Caco-2 (cell line): ENCODE measurements at regions of chrX and their contacts with region 1.

Region 1: DNA sequence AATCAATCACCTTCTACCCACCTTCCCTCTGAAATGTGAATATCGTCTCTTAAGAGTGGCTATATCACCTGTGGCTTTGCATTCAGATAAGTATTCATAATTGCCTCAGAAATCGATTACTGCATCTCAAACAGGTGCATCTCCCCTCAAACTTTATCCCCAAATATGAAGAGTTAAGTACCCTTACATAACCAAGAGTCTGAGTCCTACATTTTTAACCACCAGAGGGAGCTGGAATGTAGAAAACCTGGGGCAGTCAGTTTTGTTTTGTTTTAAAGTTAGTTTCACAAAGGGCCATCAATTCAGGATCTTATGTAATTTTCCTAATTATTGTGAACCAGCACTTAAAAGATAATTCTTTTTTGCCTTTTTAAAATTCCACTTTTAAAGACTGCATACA is 5.7 kb downstream of the TCEANC start:
- DNase-seq: peak in 1 of 2 experiments; percentile 50
- H3K4me3 ChIP-seq: no peak overlapping the region
- H3K4me3 Mint-ChIP-seq: no peak overlapping the region
- H3K27ac Mint-ChIP-seq: no peak overlapping the region
- H3K4me1 ChIP-seq: peaks cover 5% of the 10 kb centered on the region
- H3K4me1 Mint-ChIP-seq: no peaks in the 10 kb centered on the region
- H3K27me3 ChIP-seq: no peaks in the 10 kb centered on the region
- H3K27me3 Mint-ChIP-seq: no peaks in the 10 kb centered on the region
- CTCF ChIP-seq: peak in 1 of 2 experiments; percentile 50

Region 2: DNA sequence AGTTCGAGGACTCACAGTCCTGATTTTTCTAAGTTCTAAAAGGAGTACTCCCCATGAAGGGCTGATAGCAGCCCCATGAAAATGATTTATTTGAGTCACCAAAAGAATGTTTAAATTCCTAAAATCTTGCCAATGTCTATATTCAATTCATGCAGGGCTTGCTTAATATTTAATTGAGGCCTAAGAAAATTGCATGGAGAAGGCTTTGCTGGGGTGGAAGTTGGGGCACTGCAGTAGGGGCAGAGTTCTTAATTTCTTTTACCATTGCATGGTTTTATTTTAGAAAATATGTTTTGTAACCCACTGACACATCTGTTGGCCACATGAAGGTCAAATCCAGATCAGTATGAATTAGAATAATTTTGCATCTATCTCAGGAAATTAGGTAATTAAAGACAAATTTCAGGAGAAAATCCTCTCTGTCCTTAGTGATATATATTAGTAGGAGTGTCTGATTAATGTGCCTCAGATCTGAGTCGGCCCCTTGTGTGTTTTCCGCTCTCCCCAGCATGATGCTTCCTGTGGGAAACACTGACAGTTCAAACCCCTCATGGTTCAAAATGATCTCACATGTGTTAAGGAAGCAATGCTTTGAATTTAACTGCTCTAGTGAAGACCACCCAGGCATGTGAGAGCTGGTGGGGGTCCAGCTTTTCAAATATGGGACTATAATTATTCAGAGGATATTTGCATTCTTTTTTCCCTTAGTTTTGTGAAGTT is 143.2 kb before region 1 on chrX:
- CTCF ChIA-PET with region 1: no interaction called
- POLR2A ChIA-PET with region 1: no interaction called
- intact Hi-C with region 1: no loop called
- DNase-seq: no peak
- H3K4me3 ChIP-seq: no peak overlapping the region
- H3K4me3 Mint-ChIP-seq: no peak overlapping the region
- H3K27ac Mint-ChIP-seq: no peak overlapping the region
- H3K4me1 ChIP-seq: no peaks in the 10 kb centered on the region
- H3K4me1 Mint-ChIP-seq: no peaks in the 10 kb centered on the region
- H3K27me3 ChIP-seq: no peaks in the 10 kb centered on the region
- H3K27me3 Mint-ChIP-seq: no peaks in the 10 kb centered on the region
- CTCF ChIP-seq: no peak

Region 3: DNA sequence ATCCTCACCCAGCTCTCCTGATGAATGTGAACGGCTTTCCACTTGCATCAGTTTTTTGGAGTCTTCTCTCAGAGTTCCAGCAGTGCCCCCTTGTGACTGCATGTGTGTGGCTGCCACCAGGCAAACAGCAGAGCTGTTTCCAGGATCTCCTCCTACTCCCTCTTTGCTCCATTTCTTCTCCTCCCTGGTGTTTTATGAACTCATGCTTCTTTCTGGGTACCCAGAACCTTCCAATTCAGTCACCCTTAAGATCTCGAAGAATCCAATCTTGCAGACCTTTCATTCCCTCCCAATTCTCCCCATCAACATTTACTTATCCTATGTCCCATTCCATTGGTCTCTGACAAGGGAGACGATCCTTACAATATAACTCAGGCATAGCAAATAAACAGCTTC is 12.4 kb before region 1 on chrX:
- CTCF ChIA-PET with region 1: no interaction called
- POLR2A ChIA-PET with region 1: no interaction called
- intact Hi-C with region 1: no loop called
- DNase-seq: peak; percentile 44 to 63
- H3K4me3 ChIP-seq: no peak overlapping the region
- H3K4me3 Mint-ChIP-seq: no peak overlapping the region
- H3K27ac Mint-ChIP-seq: no peak overlapping the region
- H3K4me1 ChIP-seq: no peaks in the 10 kb centered on the region
- H3K4me1 Mint-ChIP-seq: peaks cover 6% of the 10 kb centered on the region
- H3K27me3 ChIP-seq: no peaks in the 10 kb centered on the region
- H3K27me3 Mint-ChIP-seq: no peaks in the 10 kb centered on the region
- CTCF ChIP-seq: peak; percentile 48 to 61

Region 4: GRCh38 chrX:13688958-13689740 is 30.5 kb after region 1 on chrX and contains the start of gene RAB9A:
- CTCF ChIA-PET with region 1: no interaction called
- POLR2A ChIA-PET with region 1: no interaction called
- intact Hi-C with region 1: loop called (anchors 1 kb)
- DNase-seq: peak; percentile 86 to 92
- H3K4me3 ChIP-seq: peak within 1 kb of the TSS; percentile 76
- H3K4me3 Mint-ChIP-seq: peak within 1 kb of the TSS; percentile 84
- H3K27ac Mint-ChIP-seq: peak within 1 kb of the TSS; percentile 86
- H3K4me1 ChIP-seq: no peaks in the 10 kb centered on the region; the same call in 1 of the 2 replicates
- H3K4me1 Mint-ChIP-seq: peaks cover 20% of the 10 kb centered on the region
- H3K27me3 ChIP-seq: no peaks in the 10 kb centered on the region
- H3K27me3 Mint-ChIP-seq: no peaks in the 10 kb centered on the region
- CTCF ChIP-seq: peak in 1 of 2 experiments; percentile 10
- total RNA-seq, gene RAB9A: 22.9 and 25.5 TPM in 2 replicates

Region 5: DNA sequence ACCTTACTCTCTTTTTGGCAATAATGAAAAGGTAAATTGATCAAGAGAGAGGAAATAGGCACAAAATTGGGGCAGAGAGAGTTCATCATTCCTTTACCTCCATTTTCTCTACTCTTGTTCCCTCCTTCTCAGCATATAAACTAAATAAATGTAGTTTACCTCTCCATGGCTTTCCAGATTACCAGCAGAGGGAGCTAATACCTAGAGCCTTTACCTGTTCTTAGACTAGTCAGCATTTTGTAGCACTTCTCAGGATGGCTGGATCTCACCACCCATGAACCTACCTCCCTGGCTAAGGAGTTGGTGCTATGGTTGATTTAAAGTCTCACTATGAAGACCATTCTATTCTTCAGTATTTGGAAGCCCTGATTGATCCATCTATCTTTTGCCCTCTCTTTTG is 91.6 kb after region 1 on chrX:
- CTCF ChIA-PET with region 1: no interaction called
- POLR2A ChIA-PET with region 1: no interaction called
- intact Hi-C with region 1: loop called (anchors 1 kb)
- DNase-seq: peak in 1 of 2 experiments; percentile 39
- H3K4me3 ChIP-seq: no peak overlapping the region
- H3K4me3 Mint-ChIP-seq: no peak overlapping the region
- H3K27ac Mint-ChIP-seq: no peak overlapping the region
- H3K4me1 ChIP-seq: peaks cover 24% of the 10 kb centered on the region
- H3K4me1 Mint-ChIP-seq: peaks cover 17% of the 10 kb centered on the region
- H3K27me3 ChIP-seq: no peaks in the 10 kb centered on the region
- H3K27me3 Mint-ChIP-seq: no peaks in the 10 kb centered on the region
- CTCF ChIP-seq: peak; percentile 41 to 52